ENCODE measurements at regions of chr2 and their contacts with region 1.

Region 1: DNA sequence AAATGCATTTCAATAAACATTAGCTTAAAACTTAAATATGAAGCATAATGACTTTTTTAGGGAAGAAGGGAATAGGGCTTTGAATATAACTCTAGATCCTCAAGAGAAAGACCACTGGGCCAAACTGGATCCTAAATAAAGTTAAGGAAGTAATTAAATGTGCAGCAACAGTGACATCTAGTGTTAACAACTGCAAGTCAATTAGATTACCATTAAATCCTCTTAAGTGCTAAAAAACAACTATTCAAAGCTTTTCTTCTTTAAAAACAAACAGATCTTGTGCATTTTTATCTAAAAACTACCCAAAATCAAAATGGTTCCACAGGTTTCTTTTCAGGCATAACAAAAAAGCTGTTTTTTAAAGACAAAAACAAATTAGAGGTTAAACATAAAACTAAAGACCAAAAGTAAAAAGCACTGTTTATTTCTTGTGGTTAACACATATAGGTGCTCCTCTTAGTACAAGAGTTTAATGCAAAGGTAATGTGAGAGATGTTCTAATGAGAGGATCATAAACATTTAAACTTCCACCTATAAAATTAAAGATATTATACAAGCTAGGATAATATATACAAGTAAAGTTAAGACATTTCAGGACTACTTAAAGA is 111.4 kb downstream of the THADA start:
- DNase-seq: peak; percentile 85
- ATAC-seq: peak; percentile 73
- H3K4me3 ChIP-seq: no peak overlapping the region
- H3K27ac ChIP-seq: no peak overlapping the region
- H3K4me1 ChIP-seq: no peaks in the 10 kb centered on the region
- H3K27me3 ChIP-seq: no peaks in the 10 kb centered on the region
- CTCF ChIP-seq: peak; percentile 65
- POLR2A ChIP-seq: no peak
- RAD21 ChIP-seq: peak; percentile 82

Region 2: DNA sequence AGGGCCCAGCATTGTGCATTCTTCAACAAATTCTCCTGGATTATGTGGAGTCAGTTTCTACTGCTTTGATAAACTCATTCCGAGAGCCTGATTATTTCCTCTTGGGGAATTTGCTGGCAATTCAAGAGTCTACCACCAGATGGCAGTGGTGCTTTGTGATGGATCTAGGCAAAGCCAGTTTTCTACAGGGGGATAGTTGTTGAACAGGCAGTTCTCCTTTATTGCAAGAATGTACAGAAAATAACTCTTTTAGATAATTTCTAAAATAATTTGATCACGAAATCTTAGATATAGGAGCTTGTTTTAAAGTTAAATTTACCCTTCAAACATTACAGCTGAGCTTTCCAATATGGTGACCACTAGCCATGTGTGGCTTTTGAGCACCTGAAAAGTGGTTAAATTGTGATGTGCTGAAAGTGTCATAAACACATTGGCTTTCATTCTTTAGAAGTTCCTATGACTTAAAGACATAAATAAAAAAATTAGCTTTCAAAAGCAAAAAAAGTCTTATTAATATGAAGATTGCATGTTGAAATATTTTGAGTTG is 625.3 kb before region 1 on chr2:
- CTCF ChIA-PET with region 1: no interaction called
- POLR2A ChIA-PET with region 1: no interaction called
- dilution Hi-C with region 1: no loop called
- in situ Hi-C with region 1: no loop called
- intact Hi-C with region 1: loop called (anchors 1 kb)
- DNase-seq: peak; percentile 81
- ATAC-seq: peak; percentile 81
- H3K4me3 ChIP-seq: no peak overlapping the region
- H3K27ac ChIP-seq: no peak overlapping the region
- H3K4me1 ChIP-seq: peaks cover 5% of the 10 kb centered on the region
- H3K27me3 ChIP-seq: no peaks in the 10 kb centered on the region
- CTCF ChIP-seq: peak; percentile 93
- POLR2A ChIP-seq: no peak
- RAD21 ChIP-seq: peak; percentile 95

Region 3: DNA sequence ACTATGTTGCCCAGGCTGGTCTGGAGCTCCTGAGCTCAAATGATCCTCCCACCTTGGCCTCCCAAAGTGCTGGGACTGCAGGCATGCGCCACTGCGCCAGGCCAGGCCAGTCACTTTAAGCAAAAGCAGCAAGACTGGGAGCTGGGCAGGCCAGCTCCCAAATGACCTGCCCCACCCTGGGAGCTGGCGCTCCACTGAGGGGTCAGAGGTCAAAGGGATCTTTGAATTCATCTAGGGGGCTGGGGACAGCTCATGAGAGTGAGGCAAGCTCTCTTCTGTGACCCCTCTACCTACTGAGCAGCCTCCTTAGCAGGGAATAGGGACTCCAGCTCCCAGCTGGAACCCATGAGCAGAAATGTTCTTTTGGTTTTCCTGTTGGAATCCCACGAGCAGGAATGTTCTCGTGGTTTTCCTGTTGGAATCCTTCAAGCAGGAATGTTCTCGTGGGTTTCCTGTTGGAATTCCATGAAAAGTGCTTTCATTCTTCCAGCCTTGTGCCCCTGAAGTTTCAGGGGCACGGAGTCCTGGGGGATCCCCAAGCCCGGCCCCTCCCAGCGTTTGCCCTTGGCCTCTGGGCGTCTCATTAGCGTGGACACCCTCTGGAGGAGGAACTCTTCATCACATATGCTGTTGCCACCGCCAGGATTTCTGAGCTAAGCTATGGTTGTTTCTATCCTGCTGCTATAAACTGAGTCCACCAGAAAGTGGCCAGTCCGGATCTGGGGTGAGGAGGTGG is 530.0 kb before region 1 on chr2:
- CTCF ChIA-PET with region 1: no interaction called
- POLR2A ChIA-PET with region 1: no interaction called
- dilution Hi-C with region 1: no loop called
- in situ Hi-C with region 1: loop called (anchors 5 kb)
- intact Hi-C with region 1: no loop called
- DNase-seq: peak; percentile 65
- ATAC-seq: peak; percentile 25; the same call in 1 of the 2 replicates
- H3K4me3 ChIP-seq: no peak overlapping the region
- H3K27ac ChIP-seq: no peak overlapping the region
- H3K4me1 ChIP-seq: peaks cover 20% of the 10 kb centered on the region
- H3K27me3 ChIP-seq: no peaks in the 10 kb centered on the region
- CTCF ChIP-seq: no peak
- POLR2A ChIP-seq: no peak
- RAD21 ChIP-seq: no peak

Region 4: DNA sequence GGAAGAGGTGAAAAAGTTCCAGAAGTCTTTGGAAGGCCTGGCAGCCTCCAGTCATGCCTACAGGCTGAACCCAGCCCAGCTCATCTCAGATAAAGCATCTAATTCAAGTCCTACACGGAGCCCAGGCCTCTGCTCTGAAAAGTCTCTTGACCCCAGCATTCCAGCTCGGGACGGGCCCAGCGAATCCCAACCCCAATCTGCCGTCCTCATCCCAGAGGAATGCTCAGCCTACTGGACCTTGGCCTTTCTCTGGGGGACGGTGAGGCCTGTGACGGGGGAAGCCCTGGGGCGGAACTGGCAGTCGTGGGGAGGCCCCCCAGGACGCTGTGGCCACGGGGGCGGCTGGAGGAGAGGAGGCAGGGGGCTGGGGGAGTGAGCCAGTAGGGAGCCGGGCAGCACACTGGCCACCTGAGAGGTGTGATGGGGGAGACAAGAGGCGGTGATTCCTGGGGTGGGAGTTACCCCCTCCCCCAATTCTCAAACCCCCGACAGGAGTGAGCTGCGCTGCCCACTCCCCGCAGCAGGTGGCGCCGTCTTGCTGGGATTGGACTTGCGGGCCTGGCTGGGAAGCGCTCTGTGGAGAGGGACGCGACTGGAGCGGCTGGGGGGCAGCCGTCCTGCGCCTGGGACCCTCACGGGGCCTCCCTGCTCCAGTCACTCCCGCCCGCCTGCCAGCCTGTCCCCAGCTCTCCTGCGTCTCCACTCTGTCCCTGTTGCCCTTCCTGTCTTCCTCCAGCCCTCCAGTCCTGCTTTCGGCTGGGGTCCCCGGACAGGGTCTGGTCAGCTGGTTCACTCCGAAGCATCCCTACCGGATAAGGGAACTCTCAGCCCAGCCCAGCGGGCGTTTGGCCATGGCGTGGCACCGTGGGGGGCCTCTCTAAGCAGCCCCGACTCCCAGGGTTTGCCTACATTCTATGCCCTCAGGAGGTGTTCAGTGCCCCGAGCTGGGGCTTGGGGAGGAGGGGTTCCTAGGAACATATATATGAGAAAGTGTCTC is 509.4 kb before region 1 on chr2:
- CTCF ChIA-PET with region 1: interaction called, 5 read pairs
- POLR2A ChIA-PET with region 1: no interaction called
- dilution Hi-C with region 1: no loop called
- in situ Hi-C with region 1: no loop called
- intact Hi-C with region 1: loop called (anchors 10 kb)
- DNase-seq: peak; percentile 63
- ATAC-seq: peak; percentile 91
- H3K4me3 ChIP-seq: peak overlapping the region; percentile 15; the same call in 1 of the 2 replicates
- H3K27ac ChIP-seq: peak overlapping the region; percentile 79
- H3K4me1 ChIP-seq: peaks cover 20% of the 10 kb centered on the region
- H3K27me3 ChIP-seq: no peaks in the 10 kb centered on the region
- CTCF ChIP-seq: peak; percentile 88
- POLR2A ChIP-seq: peak; percentile 54; the same call in 1 of the 2 replicates
- RAD21 ChIP-seq: peak; percentile 97

Region 5: GRCh38 chr2:43300840-43301583 is 183.4 kb before region 1 on chr2:
- CTCF ChIA-PET with region 1: no interaction called
- POLR2A ChIA-PET with region 1: no interaction called
- dilution Hi-C with region 1: no loop called
- in situ Hi-C with region 1: no loop called
- intact Hi-C with region 1: no loop called
- DNase-seq: no peak
- ATAC-seq: no peak
- H3K4me3 ChIP-seq: no peak overlapping the region
- H3K27ac ChIP-seq: no peak overlapping the region
- H3K4me1 ChIP-seq: peaks cover 4% of the 10 kb centered on the region; the same call in 1 of the 2 replicates
- H3K27me3 ChIP-seq: no peaks in the 10 kb centered on the region; the same call in 1 of the 2 replicates
- CTCF ChIP-seq: no peak
- POLR2A ChIP-seq: no peak
- RAD21 ChIP-seq: no peak

Region 6: DNA sequence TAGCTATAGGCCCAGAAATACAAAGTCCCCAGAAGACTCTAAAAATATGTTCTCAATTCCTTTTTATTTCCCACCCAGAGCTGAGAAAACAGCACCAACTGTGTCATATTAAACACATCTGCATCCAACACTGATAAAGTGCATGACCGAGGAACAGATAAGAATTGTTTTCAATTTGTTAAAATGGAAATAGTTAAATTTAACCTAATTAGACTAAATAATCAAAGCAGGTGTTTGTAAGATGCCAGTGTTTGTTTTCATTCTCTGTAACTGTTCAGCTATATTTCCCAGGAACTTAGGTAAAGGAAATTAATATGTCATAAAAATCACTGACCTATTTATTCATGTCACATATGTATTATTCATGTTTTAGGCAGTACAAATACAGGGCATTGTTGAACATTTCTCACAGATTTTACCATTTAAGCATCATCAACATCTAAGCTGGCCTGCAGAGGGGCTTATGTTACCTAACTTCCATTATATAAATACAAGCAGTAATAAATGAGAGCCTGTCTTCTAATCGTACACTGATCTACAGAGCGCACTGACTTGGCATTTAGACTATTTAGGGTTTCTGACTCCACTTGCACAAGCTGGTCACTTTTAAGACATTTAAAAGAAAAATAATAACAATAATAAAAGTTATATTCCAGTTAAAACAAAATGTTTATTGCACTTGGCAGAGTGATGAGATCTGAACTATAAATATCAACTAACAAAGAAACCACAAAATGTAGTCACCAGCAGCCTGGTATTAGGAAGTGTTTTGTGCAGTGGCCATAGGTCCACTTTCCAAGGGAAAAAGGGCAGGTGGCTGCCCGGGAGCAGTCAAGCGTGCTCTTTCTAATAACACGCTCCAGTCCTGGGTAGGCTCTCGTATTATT is 171.4 kb before region 1 on chr2:
- CTCF ChIA-PET with region 1: no interaction called
- POLR2A ChIA-PET with region 1: interaction called, 10 read pairs
- dilution Hi-C with region 1: no loop called
- in situ Hi-C with region 1: no loop called
- intact Hi-C with region 1: no loop called
- DNase-seq: peak; percentile 88
- ATAC-seq: peak; percentile 94
- H3K4me3 ChIP-seq: no peak overlapping the region
- H3K27ac ChIP-seq: no peak overlapping the region
- H3K4me1 ChIP-seq: peaks cover 10% of the 10 kb centered on the region
- H3K27me3 ChIP-seq: 0 out of 2 replicates have a peak, but pooled peaks cover 2% of the 10 kb centered on the region
- CTCF ChIP-seq: no peak
- POLR2A ChIP-seq: no peak
- RAD21 ChIP-seq: 0 out of 2 replicates have a peak, but pooled peaks have one; percentile 15

Region 7: GRCh38 chr2:43542285-43542937 is 58.0 kb after region 1 on chr2:
- CTCF ChIA-PET with region 1: interaction called, 3 read pairs
- POLR2A ChIA-PET with region 1: no interaction called
- dilution Hi-C with region 1: no loop called
- in situ Hi-C with region 1: no loop called
- intact Hi-C with region 1: loop called (anchors 2 kb)
- DNase-seq: peak; percentile 68
- ATAC-seq: peak; percentile 77
- H3K4me3 ChIP-seq: no peak overlapping the region
- H3K27ac ChIP-seq: no peak overlapping the region
- H3K4me1 ChIP-seq: peaks cover 7% of the 10 kb centered on the region
- H3K27me3 ChIP-seq: no peaks in the 10 kb centered on the region
- CTCF ChIP-seq: peak; percentile 58
- POLR2A ChIP-seq: no peak
- RAD21 ChIP-seq: peak; percentile 72

Measured in IMR-90 (cell line).